Ascending aorta (tissue), 2 donors: ENCODE measurements at regions of chr1 and their contacts with region 1.

Region 1: DNA sequence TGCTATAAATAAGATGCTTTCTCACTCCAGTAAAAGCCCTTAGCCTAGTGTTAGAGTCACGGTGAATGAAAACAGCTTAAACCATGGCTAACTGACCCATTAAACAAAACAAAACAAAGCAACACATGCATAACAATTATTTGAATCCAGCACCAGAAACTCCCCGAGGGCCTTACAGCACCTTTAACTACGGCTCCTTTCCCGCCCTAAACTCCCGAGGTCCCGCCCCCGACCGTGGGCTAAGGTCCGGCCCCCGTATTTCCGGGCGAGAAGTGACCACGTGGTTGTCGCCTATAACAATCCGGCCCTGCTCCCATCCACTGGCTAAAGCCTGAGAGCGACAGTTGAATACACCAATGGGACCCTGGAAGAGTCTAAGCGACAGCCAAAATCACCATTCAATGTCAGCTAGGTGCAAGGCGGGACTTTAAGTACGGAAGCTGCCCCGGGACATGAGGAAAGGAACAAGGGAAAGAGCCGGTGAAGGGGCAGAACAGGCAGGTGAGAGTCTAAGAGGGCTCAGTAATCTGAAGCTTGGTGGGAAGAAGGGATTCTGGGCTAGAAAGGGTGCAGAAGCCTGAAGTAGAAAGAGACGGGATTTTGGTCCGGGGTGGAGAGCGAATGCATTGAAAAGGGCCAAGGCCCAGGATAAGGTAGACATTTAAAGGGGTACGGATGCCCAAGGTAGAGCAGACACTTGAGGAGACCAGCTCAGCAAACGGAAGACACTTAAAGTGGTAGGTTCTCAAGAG is at the start of gene FLAD1:
- DNase-seq: peak; percentile 97 to 99
- H3K4me3 ChIP-seq: peak within 1 kb of the TSS; percentile 58 to 84
- H3K27ac ChIP-seq: peak within 1 kb of the TSS; percentile 56 to 59
- H3K4me1 ChIP-seq: peaks cover 7 to 10% of the 10 kb centered on the region in 2 donors
- H3K27me3 ChIP-seq: no peaks in the 10 kb centered on the region
- CTCF ChIP-seq: no peak
- total RNA-seq, gene FLAD1: 31.2 TPM

Region 2: GRCh38 chr1:154747740-154748404 is 235.2 kb before region 1 on chr1:
- intact Hi-C with region 1: no loop called
- DNase-seq: peak in 1 of 2 donors; percentile 39
- H3K4me3 ChIP-seq: no peak overlapping the region
- H3K27ac ChIP-seq: no peak overlapping the region
- H3K4me1 ChIP-seq: no peaks in the 10 kb centered on the region
- H3K27me3 ChIP-seq: no peaks in the 10 kb centered on the region
- CTCF ChIP-seq: no peak

Region 3: GRCh38 chr1:154931940-154932487 is 51.1 kb before region 1 on chr1:
- intact Hi-C with region 1: no loop called
- DNase-seq: no peak
- H3K4me3 ChIP-seq: no peak overlapping the region
- H3K27ac ChIP-seq: no peak overlapping the region
- H3K4me1 ChIP-seq: peaks cover 0 to 9% of the 10 kb centered on the region in 2 donors
- H3K27me3 ChIP-seq: no peaks in the 10 kb centered on the region
- CTCF ChIP-seq: no peak

Region 4: GRCh38 chr1:154955718-154956543 is 27.1 kb before region 1 on chr1 and contains the start of gene PBXIP1:
- intact Hi-C with region 1: loop called (anchors 1 kb)
- DNase-seq: peak; percentile 52 to 93
- H3K4me3 ChIP-seq: peak within 1 kb of the TSS; percentile 68 to 70
- H3K27ac ChIP-seq: peak within 1 kb of the TSS; percentile 65 to 83
- H3K4me1 ChIP-seq: peaks cover 18 to 47% of the 10 kb centered on the region in 2 donors
- H3K27me3 ChIP-seq: no peaks in the 10 kb centered on the region
- CTCF ChIP-seq: peak in 2 of 3 experiments; percentile 15 to 26
- total RNA-seq, gene PBXIP1: 70.0 TPM

Region 5: DNA sequence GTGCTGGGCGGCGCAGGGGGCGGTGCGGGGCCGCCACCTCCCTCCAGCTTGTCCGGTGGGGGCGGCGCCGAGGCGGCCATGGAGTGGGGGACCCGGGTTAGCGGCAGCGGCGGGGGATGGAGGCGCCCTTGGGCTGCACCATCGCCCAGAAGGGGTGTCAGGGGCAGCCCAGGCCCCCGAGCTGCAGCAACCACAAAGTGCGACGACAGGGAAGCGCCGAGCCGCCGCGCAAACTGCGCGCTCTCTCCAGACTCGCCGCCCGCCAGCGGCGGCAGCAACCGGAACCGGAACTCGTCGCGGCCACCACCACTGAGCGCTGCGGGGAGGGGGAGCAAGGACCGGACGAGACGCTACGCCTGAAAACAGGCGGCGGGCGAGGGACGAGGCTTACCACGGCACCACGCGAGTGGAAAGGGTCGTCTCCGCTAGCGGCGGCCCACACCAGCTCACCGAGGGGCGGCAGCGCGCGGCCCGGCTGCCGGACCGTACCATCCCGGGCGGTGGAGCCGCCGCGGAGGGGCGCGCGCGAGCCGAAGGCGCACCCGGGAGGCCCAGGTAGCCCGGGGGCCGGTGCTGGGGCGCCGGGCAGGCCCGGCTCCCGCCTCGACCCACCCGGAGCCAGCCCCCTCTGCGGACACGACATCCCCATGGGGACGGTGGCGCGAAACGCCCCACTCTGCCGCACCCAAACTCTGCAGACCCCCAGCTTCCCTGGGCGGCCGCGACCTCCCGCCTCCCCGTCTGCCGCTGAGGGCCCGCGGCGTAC is 21.4 kb before region 1 on chr1 and contains the start of gene PYGO2:
- intact Hi-C with region 1: loop called (anchors 1 kb)
- DNase-seq: peak in 1 of 2 donors; percentile 90
- H3K4me3 ChIP-seq: peak within 1 kb of the TSS; percentile 97
- H3K27ac ChIP-seq: peak within 1 kb of the TSS; percentile 95 to 97
- H3K4me1 ChIP-seq: peaks cover 3 to 27% of the 10 kb centered on the region in 2 donors
- H3K27me3 ChIP-seq: no peaks in the 10 kb centered on the region
- CTCF ChIP-seq: peak; percentile 45 to 95 (median 52)
- total RNA-seq, gene PYGO2: 48.7 TPM

Region 6: GRCh38 chr1:155017041-155017945 is 34.2 kb after region 1 on chr1:
- intact Hi-C with region 1: no loop called
- DNase-seq: peak; percentile 68 to 96
- H3K4me3 ChIP-seq: peak overlapping the region; percentile 42 to 59
- H3K27ac ChIP-seq: peak overlapping the region; percentile 82 to 89
- H3K4me1 ChIP-seq: peaks cover 7 to 15% of the 10 kb centered on the region in 2 donors
- H3K27me3 ChIP-seq: no peaks in the 10 kb centered on the region
- CTCF ChIP-seq: peak; percentile 99 to 100 (median 99)

Region 7: DNA sequence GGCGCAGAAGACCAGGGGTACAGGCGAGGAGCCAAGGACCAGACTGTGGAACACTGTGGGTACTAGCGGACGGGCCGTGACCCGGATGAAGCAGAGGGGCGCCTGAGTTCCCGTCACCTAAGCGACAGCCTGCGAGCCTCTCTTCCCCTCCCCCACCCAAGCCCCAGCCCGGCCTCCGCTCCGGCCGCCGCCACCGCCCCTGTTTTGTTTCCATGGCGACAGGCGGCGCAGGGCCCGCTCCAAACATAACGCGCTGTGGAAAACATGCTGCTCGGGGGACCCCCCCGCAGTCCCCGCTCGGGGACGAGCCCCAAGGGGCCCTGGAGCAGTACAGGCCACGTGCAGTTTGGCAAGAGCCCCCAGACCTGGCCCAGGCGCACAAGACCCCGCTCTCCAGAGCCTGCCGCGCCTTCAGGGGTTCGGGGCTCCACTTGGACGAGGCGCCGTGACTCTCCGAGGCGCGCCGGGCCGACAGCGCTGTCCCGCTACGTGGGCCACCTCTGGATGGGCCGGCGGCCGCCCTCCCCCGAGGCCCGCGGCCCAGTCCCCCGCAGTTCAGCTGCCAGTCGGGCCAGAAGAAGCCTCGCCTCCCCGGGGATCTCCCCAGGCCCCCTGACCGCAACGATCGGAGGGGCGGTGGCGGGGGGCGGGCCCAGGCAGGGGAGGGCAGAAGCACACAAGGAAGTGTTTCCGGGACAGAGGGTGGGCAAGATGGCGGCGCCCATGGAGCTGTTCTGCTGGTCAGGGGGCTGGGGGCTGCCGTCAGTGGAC is 225.7 kb after region 1 on chr1 and contains the start of gene MTX1:
- intact Hi-C with region 1: no loop called
- DNase-seq: peak; percentile 77 to 97
- H3K4me3 ChIP-seq: peak within 1 kb of the TSS; percentile 77 to 79
- H3K27ac ChIP-seq: peak within 1 kb of the TSS; percentile 99 to 100
- H3K4me1 ChIP-seq: peaks cover 7 to 27% of the 10 kb centered on the region in 2 donors
- H3K27me3 ChIP-seq: no peaks in the 10 kb centered on the region
- CTCF ChIP-seq: peak in 1 of 3 experiments; percentile 7
- total RNA-seq, gene MTX1: 23.9 TPM